CD8-positive, alpha-beta T cell (primary cell): ENCODE measurements at regions of chrX and their contacts with region 1.

Region 1: DNA sequence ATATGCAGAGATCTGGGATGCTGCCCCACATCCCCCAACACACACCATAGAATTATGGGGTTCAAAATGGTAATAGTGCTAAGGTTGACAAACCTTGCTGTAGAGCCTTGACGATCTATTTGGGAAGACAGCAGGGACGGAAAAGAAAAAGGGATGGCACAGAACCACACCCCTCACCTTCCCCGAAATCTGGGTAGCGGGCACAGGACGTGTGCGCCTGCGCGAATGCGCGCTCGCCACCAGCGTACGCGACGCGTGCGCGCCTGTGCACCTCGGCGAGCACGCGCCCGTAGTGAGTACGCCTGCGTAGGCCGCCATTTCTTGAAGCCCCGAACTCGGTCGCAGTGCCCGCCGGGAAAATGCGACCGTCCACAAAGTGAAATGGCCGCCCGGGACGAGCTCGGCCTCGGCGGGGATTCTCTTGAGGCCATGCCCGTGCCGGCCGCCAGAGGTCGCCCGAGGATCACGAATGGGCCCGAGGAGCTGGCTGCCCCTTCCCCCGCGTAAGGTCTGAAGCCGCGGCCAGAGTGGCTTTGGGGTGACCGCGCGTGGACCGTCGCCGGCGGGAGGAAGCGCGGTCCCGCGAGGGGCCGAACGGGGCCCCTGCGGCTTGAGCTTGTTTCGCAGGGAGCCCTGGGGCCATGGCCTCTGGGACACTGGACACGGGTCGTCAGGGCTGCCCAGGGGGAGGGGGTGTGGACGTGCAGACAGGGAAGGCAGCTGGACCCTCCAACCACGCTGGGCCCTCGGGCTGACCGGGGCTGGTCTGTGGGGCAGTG is 43.6 kb downstream of the ZNF185 start:
- DNase-seq: peak; percentile 77 to 95 (median 87)
- ATAC-seq: peak; percentile 98
- H3K4me3 ChIP-seq: peak overlapping the region; percentile 55 to 84
- H3K4me3 Mint-ChIP-seq: peak overlapping the region; percentile 81
- H3K27ac ChIP-seq: peak overlapping the region; percentile 55 to 74
- H3K27ac Mint-ChIP-seq: peak overlapping the region; percentile 89
- H3K4me1 ChIP-seq: peaks cover 16% of the 10 kb centered on the region
- H3K4me1 Mint-ChIP-seq: peaks cover 11% of the 10 kb centered on the region
- H3K27me3 ChIP-seq: no peaks in the 10 kb centered on the region
- H3K27me3 Mint-ChIP-seq: no peaks in the 10 kb centered on the region
- CTCF ChIP-seq: peak; percentile 69

Region 2: GRCh38 chrX:152428125-152428524 is 513.4 kb before region 1 on chrX:
- CTCF ChIA-PET with region 1: no interaction called
- POLR2A ChIA-PET with region 1: no interaction called
- intact Hi-C with region 1: no loop called
- DNase-seq: no peak
- ATAC-seq: no peak
- H3K4me3 ChIP-seq: no peak overlapping the region
- H3K4me3 Mint-ChIP-seq: no peak overlapping the region
- H3K27ac ChIP-seq: no peak overlapping the region
- H3K27ac Mint-ChIP-seq: no peak overlapping the region
- H3K4me1 ChIP-seq: no peaks in the 10 kb centered on the region
- H3K4me1 Mint-ChIP-seq: no peaks in the 10 kb centered on the region
- H3K27me3 ChIP-seq: no peaks in the 10 kb centered on the region
- H3K27me3 Mint-ChIP-seq: no peaks in the 10 kb centered on the region
- CTCF ChIP-seq: no peak

Region 3: DNA sequence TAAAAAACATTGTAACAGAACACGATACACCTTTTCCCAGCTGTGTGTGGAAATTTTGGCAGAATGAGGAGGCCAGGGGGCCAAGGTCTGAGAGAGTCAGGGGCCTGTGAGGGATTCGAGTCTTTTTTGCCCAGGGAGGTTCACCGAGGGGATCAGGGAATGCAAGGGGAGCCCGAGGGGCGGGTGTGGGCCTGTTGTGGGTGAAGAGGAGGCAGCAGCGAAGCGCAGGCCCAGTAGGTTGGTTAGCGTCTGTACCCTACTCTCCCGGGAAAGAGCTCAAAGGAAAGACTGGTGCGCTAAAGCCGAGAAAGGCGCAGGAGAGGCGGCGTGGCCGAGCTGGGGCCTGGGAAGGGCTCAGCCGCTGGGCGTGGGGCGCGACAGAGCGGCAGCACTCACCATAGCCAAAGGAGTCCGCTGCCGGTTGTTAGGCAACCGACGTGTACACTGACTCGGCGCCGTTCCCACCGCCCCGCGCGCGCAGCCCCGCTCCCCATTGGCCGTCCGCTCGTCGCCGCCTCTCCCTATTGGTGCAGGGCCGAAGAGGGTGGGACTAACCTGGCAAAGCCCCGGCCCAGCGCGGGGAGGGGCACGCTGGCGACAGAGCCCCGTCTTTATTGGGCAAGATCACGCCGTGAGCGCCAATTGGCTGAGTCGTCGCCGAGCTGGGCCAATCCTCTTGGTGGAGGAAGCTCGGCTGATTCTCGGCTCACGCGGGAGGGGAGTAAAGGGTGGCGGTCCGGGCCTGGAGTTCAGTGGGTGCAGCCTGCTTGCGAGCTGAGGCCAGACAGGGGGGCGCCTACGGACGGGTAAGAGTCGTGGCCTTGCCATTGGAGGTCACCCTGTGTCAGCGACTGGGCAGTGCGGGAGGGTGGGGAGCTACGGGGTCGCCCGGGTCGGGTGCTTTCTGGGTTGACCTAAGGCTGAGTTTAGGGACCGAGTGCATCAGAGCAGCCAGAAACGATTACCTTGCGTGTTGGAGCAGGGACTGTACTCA is 110.9 kb before region 1 on chrX and contains the starts of genes CETN2 and NSDHL:
- CTCF ChIA-PET with region 1: no interaction called
- POLR2A ChIA-PET with region 1: no interaction called
- intact Hi-C with region 1: loop called (anchors 2 kb)
- DNase-seq: peak; percentile 87 to 95 (median 92)
- ATAC-seq: peak; percentile 97
- H3K4me3 ChIP-seq: peak within 1 kb of the TSS; percentile 71 to 85
- H3K4me3 Mint-ChIP-seq: peak within 1 kb of the TSS; percentile 96
- H3K27ac ChIP-seq: peak within 1 kb of the TSS; percentile 82 to 88
- H3K27ac Mint-ChIP-seq: peak within 1 kb of the TSS; percentile 91
- H3K4me1 ChIP-seq: peaks cover 18% of the 10 kb centered on the region
- H3K4me1 Mint-ChIP-seq: peaks cover 32% of the 10 kb centered on the region
- H3K27me3 ChIP-seq: no peaks in the 10 kb centered on the region
- H3K27me3 Mint-ChIP-seq: no peaks in the 10 kb centered on the region
- CTCF ChIP-seq: no peak
- total RNA-seq, gene CETN2: 3.9 to 4.9 TPM
- total RNA-seq, gene NSDHL: 3.3 to 3.6 TPM

Region 4: GRCh38 chrX:152878976-152879755 is 62.4 kb before region 1 on chrX:
- CTCF ChIA-PET with region 1: no interaction called
- POLR2A ChIA-PET with region 1: no interaction called
- intact Hi-C with region 1: no loop called
- DNase-seq: no peak
- ATAC-seq: no peak
- H3K4me3 ChIP-seq: no peak overlapping the region
- H3K4me3 Mint-ChIP-seq: no peak overlapping the region
- H3K27ac ChIP-seq: no peak overlapping the region
- H3K27ac Mint-ChIP-seq: no peak overlapping the region
- H3K4me1 ChIP-seq: no peaks in the 10 kb centered on the region
- H3K4me1 Mint-ChIP-seq: no peaks in the 10 kb centered on the region
- H3K27me3 ChIP-seq: no peaks in the 10 kb centered on the region
- H3K27me3 Mint-ChIP-seq: peaks cover 3% of the 10 kb centered on the region
- CTCF ChIP-seq: no peak

Region 5: GRCh38 chrX:153032397-153033118 is 91.0 kb after region 1 on chrX:
- CTCF ChIA-PET with region 1: no interaction called
- POLR2A ChIA-PET with region 1: no interaction called
- intact Hi-C with region 1: loop called in 1 of 2 experiments (anchors 1 kb)
- DNase-seq: peak; percentile 33 to 80 (median 64)
- ATAC-seq: peak; percentile 73
- H3K4me3 ChIP-seq: peak overlapping the region; percentile 50 to 52
- H3K4me3 Mint-ChIP-seq: peak overlapping the region; percentile 86
- H3K27ac ChIP-seq: peak overlapping the region; percentile 42 to 51
- H3K27ac Mint-ChIP-seq: peak overlapping the region; percentile 91
- H3K4me1 ChIP-seq: peaks cover 10% of the 10 kb centered on the region
- H3K4me1 Mint-ChIP-seq: peaks cover 17% of the 10 kb centered on the region
- H3K27me3 ChIP-seq: no peaks in the 10 kb centered on the region
- H3K27me3 Mint-ChIP-seq: no peaks in the 10 kb centered on the region
- CTCF ChIP-seq: peak; percentile 66

Region 6: DNA sequence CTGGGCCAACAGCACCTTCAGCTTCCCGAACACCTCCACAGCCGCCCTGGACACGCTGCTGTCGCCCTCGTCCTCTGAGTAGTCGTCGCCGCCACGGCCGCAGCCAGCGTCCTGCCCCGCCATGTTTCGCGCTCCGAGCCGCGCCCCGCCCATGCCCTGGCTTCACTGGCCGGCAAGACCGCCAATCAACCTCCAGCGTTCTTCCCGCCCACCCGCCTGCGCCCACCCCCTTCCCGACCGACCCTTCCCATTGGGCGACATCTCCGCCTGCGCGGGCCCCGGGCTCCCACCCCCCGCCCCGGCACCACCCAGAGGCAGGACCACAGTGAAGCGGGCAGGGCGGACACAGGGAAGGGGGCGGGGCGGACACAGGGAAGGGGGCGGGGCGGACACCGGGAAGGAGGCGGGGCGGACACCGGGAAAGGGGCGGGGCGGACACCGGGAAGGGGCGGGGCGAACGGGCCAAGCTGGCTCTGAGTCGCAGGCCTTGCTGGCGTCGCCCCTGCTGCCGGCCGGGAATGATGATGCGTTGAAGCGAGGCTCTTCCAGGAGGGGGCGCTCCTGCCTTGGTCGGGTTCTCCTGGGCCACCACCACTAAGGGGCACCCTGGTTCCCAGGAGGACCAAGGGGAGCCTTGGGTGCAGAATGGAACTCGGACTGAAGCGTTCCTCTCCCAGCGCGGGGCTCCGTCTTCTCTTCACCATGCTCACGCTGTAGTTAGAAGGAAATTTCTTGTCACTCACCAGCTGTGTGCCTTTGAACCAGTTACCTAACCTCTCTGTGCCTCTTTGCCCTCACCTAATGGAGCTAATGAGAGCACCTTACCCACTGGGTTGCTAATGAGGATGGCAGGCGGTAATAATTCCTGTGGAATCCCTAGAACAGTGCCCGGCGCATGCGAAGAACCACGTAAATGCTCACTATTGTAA is 529.2 kb after region 1 on chrX and contains the start of gene HAUS7:
- CTCF ChIA-PET with region 1: interaction called, 3 read pairs
- POLR2A ChIA-PET with region 1: no interaction called
- intact Hi-C with region 1: loop called (anchors 1 kb)
- DNase-seq: peak; percentile 73 to 94 (median 87)
- ATAC-seq: peak; percentile 84
- H3K4me3 ChIP-seq: peak within 1 kb of the TSS; percentile 65 to 83
- H3K4me3 Mint-ChIP-seq: peak within 1 kb of the TSS; percentile 84
- H3K27ac ChIP-seq: peak within 1 kb of the TSS; percentile 66 to 70
- H3K27ac Mint-ChIP-seq: peak within 1 kb of the TSS; percentile 77
- H3K4me1 ChIP-seq: peaks cover 18% of the 10 kb centered on the region
- H3K4me1 Mint-ChIP-seq: peaks cover 22% of the 10 kb centered on the region
- H3K27me3 ChIP-seq: no peaks in the 10 kb centered on the region
- H3K27me3 Mint-ChIP-seq: no peaks in the 10 kb centered on the region
- CTCF ChIP-seq: peak; percentile 32
- total RNA-seq, gene HAUS7: 20.5 to 20.6 TPM

Region 7: GRCh38 chrX:153599192-153600031 is 657.9 kb after region 1 on chrX:
- CTCF ChIA-PET with region 1: no interaction called
- POLR2A ChIA-PET with region 1: no interaction called
- intact Hi-C with region 1: loop called in 1 of 2 experiments (anchors 5 kb)
- DNase-seq: peak; percentile 62 to 92 (median 80)
- ATAC-seq: peak; percentile 84
- H3K4me3 ChIP-seq: peak overlapping the region; percentile 68 to 70
- H3K4me3 Mint-ChIP-seq: peak overlapping the region; percentile 84
- H3K27ac ChIP-seq: peak overlapping the region; percentile 37 to 56
- H3K27ac Mint-ChIP-seq: no peak overlapping the region
- H3K4me1 ChIP-seq: peaks cover 24% of the 10 kb centered on the region
- H3K4me1 Mint-ChIP-seq: peaks cover 47% of the 10 kb centered on the region
- H3K27me3 ChIP-seq: no peaks in the 10 kb centered on the region
- H3K27me3 Mint-ChIP-seq: no peaks in the 10 kb centered on the region
- CTCF ChIP-seq: no peak

Region 8: GRCh38 chrX:153662266-153662665 is 720.7 kb after region 1 on chrX:
- CTCF ChIA-PET with region 1: interaction called, 26 read pairs
- POLR2A ChIA-PET with region 1: no interaction called
- intact Hi-C with region 1: loop called in 1 of 2 experiments (anchors 1 kb)
- DNase-seq: peak; percentile 31 to 74 (median 62)
- ATAC-seq: no peak
- H3K4me3 ChIP-seq: peak overlapping the region in 1 of 2 experiments; percentile 18
- H3K4me3 Mint-ChIP-seq: peak overlapping the region; percentile 57
- H3K27ac ChIP-seq: no peak overlapping the region
- H3K27ac Mint-ChIP-seq: no peak overlapping the region
- H3K4me1 ChIP-seq: no peaks in the 10 kb centered on the region
- H3K4me1 Mint-ChIP-seq: peaks cover 3% of the 10 kb centered on the region
- H3K27me3 ChIP-seq: peaks cover 0 to 3% of the 10 kb centered on the region in 2 experiments
- H3K27me3 Mint-ChIP-seq: peaks cover 9% of the 10 kb centered on the region
- CTCF ChIP-seq: peak; percentile 21